Dorsolateral prefrontal cortex (tissue), 120 donors: ENCODE measurements at regions of chr6 and their contacts with region 1.

Region 1: DNA sequence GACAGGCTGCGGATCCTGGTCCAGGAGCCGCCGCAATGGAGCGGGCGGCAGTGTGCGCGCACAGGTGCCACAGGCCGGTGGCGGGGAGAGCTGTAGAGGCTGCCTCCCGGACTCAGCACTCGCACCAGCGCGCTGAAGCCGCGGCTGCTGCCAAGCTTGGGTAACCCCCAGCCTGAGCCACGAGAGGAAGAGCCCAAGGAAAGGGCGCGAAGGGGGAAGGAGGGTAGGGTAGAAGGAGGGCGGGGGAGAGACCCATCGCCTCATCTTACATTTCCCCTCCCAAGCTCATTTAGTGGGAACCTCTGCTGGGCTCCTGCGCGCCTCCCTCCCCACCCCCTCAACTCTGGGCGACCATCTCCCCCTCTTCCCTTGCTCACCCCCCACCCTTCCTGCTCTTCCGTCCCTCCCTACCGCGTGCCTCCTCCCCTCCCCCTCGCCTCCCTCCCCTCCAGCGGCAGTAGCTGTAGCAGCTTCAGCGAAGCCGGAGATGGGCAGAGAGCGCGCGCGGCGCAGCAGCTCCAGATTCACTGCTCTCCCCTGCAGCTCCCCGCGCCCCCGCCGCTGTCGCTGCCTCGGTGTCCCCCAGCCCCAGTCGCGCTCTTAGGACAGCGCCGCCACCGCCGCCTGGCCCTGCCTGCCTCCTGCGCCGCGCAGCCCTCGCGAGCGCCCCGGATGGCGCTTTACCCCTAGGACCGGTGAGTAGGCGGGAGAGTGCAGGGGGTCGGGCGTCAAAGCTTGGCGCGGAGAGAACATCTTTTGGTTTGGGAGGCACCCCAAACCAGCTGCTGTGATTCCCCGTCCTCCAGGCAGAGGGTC is at the start of gene FUT9:
- DNase-seq: peak; percentile 65 to 92 (median 87)
- H3K4me3 ChIP-seq: peak within 1 kb of the TSS; percentile 55 to 91 (median 78)
- H3K27ac ChIP-seq: peak within 1 kb of the TSS; percentile 75 to 99 (median 96)
- H3K27me3 ChIP-seq: no peaks in the 10 kb centered on the region
- CTCF ChIP-seq: peak in 28 of 56 donors; percentile 0 to 54 (median 28)
- total RNA-seq, gene FUT9: 37.9 to 88.0 (median 63.2) TPM

Region 2: DNA sequence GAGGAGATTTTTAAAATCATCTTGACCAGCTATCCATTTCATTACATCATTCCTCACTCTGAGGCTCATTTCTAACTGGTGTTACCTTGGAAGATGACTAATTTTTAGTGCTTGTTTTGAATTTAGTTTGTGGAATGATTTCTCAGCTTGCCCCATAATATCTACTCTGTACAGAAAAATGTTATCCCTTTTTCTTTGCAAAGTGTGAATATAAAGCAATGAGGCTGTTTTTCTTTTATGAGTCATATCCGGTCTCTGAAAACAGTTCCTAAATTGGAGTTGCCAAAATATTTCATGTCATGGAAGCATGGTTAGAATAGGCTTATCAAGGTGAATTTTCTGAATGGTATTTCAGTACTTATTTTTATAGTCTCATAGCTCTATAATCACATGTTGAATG is 43.9 kb after region 1 on chr6:
- intact Hi-C with region 1: loop called (anchors 5 kb)
- DNase-seq: no peak
- H3K4me3 ChIP-seq: no peak overlapping the region
- H3K27ac ChIP-seq: peak overlapping the region in 36 of 59 donors; percentile 7 to 76 (median 42)
- H3K27me3 ChIP-seq: no peaks in the 10 kb centered on the region
- CTCF ChIP-seq: no peak

Region 3: DNA sequence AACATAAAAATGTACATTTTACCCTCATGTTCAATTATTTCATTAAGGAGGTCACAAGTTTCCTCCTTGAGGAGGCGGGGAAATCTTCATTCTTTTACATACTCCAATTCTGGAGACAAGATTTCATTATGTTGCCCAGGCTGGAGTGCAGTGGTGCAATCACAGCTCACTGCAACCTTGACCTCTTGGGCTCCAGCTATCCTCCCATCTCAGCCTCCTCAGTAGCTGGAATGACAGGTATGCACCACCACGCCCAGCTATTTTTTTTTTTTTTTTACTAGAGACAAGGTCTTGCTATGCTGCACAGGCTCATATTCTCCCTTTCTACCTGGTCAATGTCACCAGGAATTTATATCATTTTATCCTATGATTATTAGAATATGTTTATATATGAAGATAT is 85.8 kb after region 1 on chr6:
- intact Hi-C with region 1: no loop called
- DNase-seq: no peak
- H3K4me3 ChIP-seq: no peak overlapping the region
- H3K27ac ChIP-seq: no peak overlapping the region
- H3K27me3 ChIP-seq: no peaks in the 10 kb centered on the region
- CTCF ChIP-seq: no peak

Region 4: GRCh38 chr6:96116663-96117062 is 100.9 kb after region 1 on chr6:
- intact Hi-C with region 1: no loop called
- DNase-seq: no peak
- H3K4me3 ChIP-seq: no peak overlapping the region
- H3K27ac ChIP-seq: no peak overlapping the region
- H3K27me3 ChIP-seq: no peaks in the 10 kb centered on the region
- CTCF ChIP-seq: no peak

Region 5: DNA sequence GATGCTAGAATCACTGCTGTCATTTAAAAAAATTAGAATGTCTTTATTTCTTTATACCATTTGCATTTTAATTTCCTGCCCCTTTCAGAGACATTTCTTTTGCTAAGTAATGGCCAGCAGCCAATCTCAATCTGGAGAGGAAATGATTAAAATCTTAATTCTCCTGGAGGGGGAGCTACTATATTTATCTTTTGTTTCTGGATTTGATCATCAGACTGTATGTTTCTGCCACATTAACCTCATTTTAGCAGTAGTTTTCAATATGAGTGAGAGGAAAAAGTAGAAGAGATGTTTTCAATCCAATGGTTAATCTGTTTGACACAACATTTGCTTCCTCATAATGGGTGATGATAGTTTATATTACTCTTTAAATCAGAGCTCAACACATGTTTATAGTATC is 138.0 kb after region 1 on chr6:
- intact Hi-C with region 1: loop called in 1 of 2 experiments (anchors 5 kb)
- DNase-seq: no peak
- H3K4me3 ChIP-seq: no peak overlapping the region
- H3K27ac ChIP-seq: peak overlapping the region in 23 of 59 donors; percentile 4 to 86 (median 41)
- H3K27me3 ChIP-seq: no peaks in the 10 kb centered on the region
- CTCF ChIP-seq: peak in 1 of 56 donors; percentile 7

Region 6: GRCh38 chr6:96521644-96522464 is 506.1 kb after region 1 on chr6 and contains the start of gene UFL1:
- intact Hi-C with region 1: loop called in 1 of 2 experiments (anchors 5 kb)
- DNase-seq: peak; percentile 86 to 96 (median 94)
- H3K4me3 ChIP-seq: peak within 1 kb of the TSS; percentile 59 to 98 (median 89)
- H3K27ac ChIP-seq: peak within 1 kb of the TSS; percentile 79 to 99 (median 94)
- H3K27me3 ChIP-seq: no peaks in the 10 kb centered on the region
- CTCF ChIP-seq: peak in 38 of 56 donors; percentile 8 to 51 (median 35)
- total RNA-seq, gene UFL1: 15.1 to 45.3 (median 22.6) TPM